Activated CD8-positive, alpha-beta T cell treated with anti-CD3 and anti-CD28 coated beads for 36 hours (primary cell): ENCODE measurements at regions of chr2 and their contacts with region 1.

Region 1: GRCh38 chr2:169824373-169825333 is at the start of gene METTL5:
- DNase-seq: peak; percentile 84
- ATAC-seq: peak; percentile 76
- H3K4me3 Mint-ChIP-seq: peak within 1 kb of the TSS; percentile 87
- H3K27ac Mint-ChIP-seq: peak within 1 kb of the TSS; percentile 86
- H3K4me1 Mint-ChIP-seq: peaks cover 57% of the 10 kb centered on the region
- H3K27me3 Mint-ChIP-seq: no peaks in the 10 kb centered on the region
- CTCF ChIP-seq: peak; percentile 99
- total RNA-seq, gene METTL5: 103 to 111 TPM

Region 2: GRCh38 chr2:169705927-169706326 is 118.7 kb before region 1 on chr2:
- CTCF ChIA-PET with region 1: no interaction called
- POLR2A ChIA-PET with region 1: no interaction called
- intact Hi-C with region 1: no loop called
- DNase-seq: no peak
- ATAC-seq: no peak
- H3K4me3 Mint-ChIP-seq: no peak overlapping the region
- H3K27ac Mint-ChIP-seq: no peak overlapping the region
- H3K4me1 Mint-ChIP-seq: no peaks in the 10 kb centered on the region
- H3K27me3 Mint-ChIP-seq: no peaks in the 10 kb centered on the region
- CTCF ChIP-seq: no peak

Region 3: GRCh38 chr2:169798718-169799592 is 25.7 kb before region 1 on chr2 and contains the start of gene SSB:
- CTCF ChIA-PET with region 1: interaction called, 6 read pairs
- POLR2A ChIA-PET with region 1: interaction called, 12 read pairs
- intact Hi-C with region 1: no loop called
- DNase-seq: peak; percentile 99
- ATAC-seq: peak; percentile 98
- H3K4me3 Mint-ChIP-seq: peak within 1 kb of the TSS; percentile 97
- H3K27ac Mint-ChIP-seq: peak within 1 kb of the TSS; percentile 98
- H3K4me1 Mint-ChIP-seq: peaks cover 29% of the 10 kb centered on the region
- H3K27me3 Mint-ChIP-seq: no peaks in the 10 kb centered on the region
- CTCF ChIP-seq: no peak
- total RNA-seq, gene SSB: 109 to 114 TPM

Region 4: GRCh38 chr2:169877398-169877797 is 52.7 kb after region 1 on chr2:
- CTCF ChIA-PET with region 1: interaction called, 11 read pairs
- POLR2A ChIA-PET with region 1: no interaction called
- intact Hi-C with region 1: loop called (anchors 10 kb)
- DNase-seq: peak; percentile 37
- ATAC-seq: no peak
- H3K4me3 Mint-ChIP-seq: no peak overlapping the region
- H3K27ac Mint-ChIP-seq: no peak overlapping the region
- H3K4me1 Mint-ChIP-seq: no peaks in the 10 kb centered on the region
- H3K27me3 Mint-ChIP-seq: no peaks in the 10 kb centered on the region
- CTCF ChIP-seq: no peak

Region 5: DNA sequence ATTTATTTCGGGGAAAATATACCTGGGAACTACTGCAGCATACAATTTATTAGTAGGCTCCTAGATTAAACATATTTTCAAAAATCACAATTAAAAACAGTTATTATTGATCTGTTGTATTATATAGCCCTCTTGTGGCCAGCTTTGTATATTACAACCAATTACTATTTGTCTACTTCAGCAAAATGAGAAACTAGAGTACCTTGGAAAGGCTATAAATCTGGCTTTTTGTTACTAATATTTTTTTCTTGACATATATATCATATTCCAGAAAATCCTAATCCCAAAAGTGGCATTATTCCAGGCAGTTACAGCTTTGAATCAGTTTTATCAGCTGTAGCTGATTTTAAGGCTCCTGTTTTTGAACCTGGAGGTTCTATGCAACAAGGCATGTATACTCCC is 103.8 kb after region 1 on chr2:
- CTCF ChIA-PET with region 1: interaction called, 5 read pairs
- POLR2A ChIA-PET with region 1: no interaction called
- intact Hi-C with region 1: loop called (anchors 5 kb)
- DNase-seq: no peak
- ATAC-seq: peak; percentile 60
- H3K4me3 Mint-ChIP-seq: no peak overlapping the region
- H3K27ac Mint-ChIP-seq: no peak overlapping the region
- H3K4me1 Mint-ChIP-seq: no peaks in the 10 kb centered on the region
- H3K27me3 Mint-ChIP-seq: no peaks in the 10 kb centered on the region
- CTCF ChIP-seq: peak; percentile 91